ENCODE measurements at regions of chr14 and their contacts with region 1.

Region 1: DNA sequence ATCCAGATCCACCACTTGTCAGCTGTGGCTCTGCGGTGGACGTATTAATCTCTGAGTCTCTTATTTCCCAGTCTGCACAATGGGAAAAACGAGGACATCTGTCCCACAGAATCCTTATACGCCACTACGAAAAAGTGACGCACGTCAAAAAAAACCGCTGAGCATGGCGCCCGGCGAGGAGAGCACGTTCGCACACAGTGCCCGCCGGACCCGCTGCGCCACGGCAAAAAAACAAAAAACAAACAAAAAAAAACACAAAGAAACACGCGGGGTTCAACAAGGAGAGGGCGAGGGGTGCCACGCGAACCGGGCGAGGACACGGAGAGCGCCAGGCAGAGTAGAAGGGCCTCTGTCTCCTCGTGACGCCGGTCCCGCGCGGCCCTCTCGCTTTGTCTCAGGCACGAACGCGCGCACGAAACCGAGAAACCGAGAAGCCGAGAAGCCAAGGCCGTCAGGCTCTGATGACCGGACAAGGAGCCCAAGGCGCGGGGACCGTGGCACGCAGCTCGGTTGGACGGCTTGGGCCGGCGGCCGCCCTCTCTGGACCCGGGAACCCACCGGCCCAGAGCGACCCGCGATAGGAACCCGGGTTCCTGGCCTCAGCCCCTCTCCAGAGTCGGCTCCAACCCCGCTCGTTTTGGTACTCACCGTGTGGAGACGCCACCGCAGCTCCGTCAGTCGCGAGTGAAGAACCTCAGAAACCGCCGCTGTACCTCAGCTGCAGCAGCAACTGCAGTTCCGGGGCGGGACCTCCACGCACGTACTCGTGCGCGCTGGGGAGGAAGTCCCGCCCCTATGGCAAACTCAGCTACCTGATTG is at the start of gene DDX24:
- DNase-seq: peak; percentile 96
- H3K4me3 Mint-ChIP-seq: peak within 1 kb of the TSS; percentile 100
- H3K27ac Mint-ChIP-seq: peak within 1 kb of the TSS; percentile 100
- H3K4me1 Mint-ChIP-seq: peaks cover 57% of the 10 kb centered on the region
- H3K27me3 Mint-ChIP-seq: no peaks in the 10 kb centered on the region
- total RNA-seq, gene DDX24: 252 and 271 TPM in 2 replicates

Region 2: GRCh38 chr14:93939304-93940229 is 141.1 kb before region 1 on chr14:
- intact Hi-C with region 1: loop called (anchors 1 kb)
- DNase-seq: peak; percentile 87
- H3K4me3 Mint-ChIP-seq: peak overlapping the region; percentile 64
- H3K27ac Mint-ChIP-seq: peak overlapping the region; percentile 88
- H3K4me1 Mint-ChIP-seq: peaks cover 24% of the 10 kb centered on the region
- H3K27me3 Mint-ChIP-seq: no peaks in the 10 kb centered on the region

Region 3: GRCh38 chr14:94021001-94021400 is 59.7 kb before region 1 on chr14:
- intact Hi-C with region 1: loop called (anchors 1 kb)
- DNase-seq: no peak
- H3K4me3 Mint-ChIP-seq: peak overlapping the region; percentile 46
- H3K27ac Mint-ChIP-seq: peak overlapping the region; percentile 76
- H3K4me1 Mint-ChIP-seq: peaks cover 37% of the 10 kb centered on the region
- H3K27me3 Mint-ChIP-seq: peaks cover 8% of the 10 kb centered on the region

Region 4: GRCh38 chr14:94056579-94057308 is 23.9 kb before region 1 on chr14:
- intact Hi-C with region 1: loop called (anchors 1 kb)
- DNase-seq: peak; percentile 45
- H3K4me3 Mint-ChIP-seq: peak overlapping the region; percentile 6
- H3K27ac Mint-ChIP-seq: peak overlapping the region; percentile 77
- H3K4me1 Mint-ChIP-seq: peaks cover 70% of the 10 kb centered on the region
- H3K27me3 Mint-ChIP-seq: no peaks in the 10 kb centered on the region

Region 5: GRCh38 chr14:94173885-94174603 is 93.4 kb after region 1 on chr14 and contains the start of gene PPP4R4:
- intact Hi-C with region 1: loop called (anchors 1 kb)
- DNase-seq: peak; percentile 85
- H3K4me3 Mint-ChIP-seq: peak within 1 kb of the TSS; percentile 83
- H3K27ac Mint-ChIP-seq: peak within 1 kb of the TSS; percentile 81
- H3K4me1 Mint-ChIP-seq: peaks cover 22% of the 10 kb centered on the region
- H3K27me3 Mint-ChIP-seq: peaks cover 49% of the 10 kb centered on the region
- total RNA-seq, gene PPP4R4: 2.2 and 2.4 TPM in 2 replicates

Region 6: DNA sequence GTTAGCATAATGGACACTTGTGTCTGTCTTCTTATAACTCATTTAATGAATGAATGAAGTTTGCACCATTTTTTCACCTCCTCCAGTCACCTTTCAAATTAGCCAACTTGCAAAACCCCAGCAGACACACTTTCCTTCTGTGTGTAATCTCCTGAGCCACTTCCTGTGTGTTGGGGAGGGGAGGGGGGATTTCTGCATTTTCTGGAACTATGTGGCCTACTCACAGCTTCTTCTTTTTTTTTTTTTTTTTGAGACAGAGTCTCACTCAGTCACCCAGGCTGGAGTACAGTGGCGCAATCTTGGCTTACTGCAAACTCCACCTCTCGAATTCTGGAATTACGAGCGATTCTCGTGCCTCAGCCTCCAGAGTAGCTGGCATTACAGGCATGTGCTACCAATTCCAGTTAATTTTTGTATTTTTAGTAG is 311.8 kb after region 1 on chr14:
- intact Hi-C with region 1: loop called (anchors 5 kb)
- DNase-seq: peak; percentile 42
- H3K4me3 Mint-ChIP-seq: no peak overlapping the region
- H3K27ac Mint-ChIP-seq: peak overlapping the region; percentile 18
- H3K4me1 Mint-ChIP-seq: peaks cover 46% of the 10 kb centered on the region
- H3K27me3 Mint-ChIP-seq: peaks cover 11% of the 10 kb centered on the region

Measured in activated T-helper 1 cell treated with anti-CD3 and anti-CD28 coated beads, Interleukin-12 subunit alpha, Interleukin-12 subunit beta, Interleukin-2, Interleukin-4 antibody, amounts not matched to agents 30 ng/mL and 10 ng/mL and 1 ng/mL, durations not matched to agents 14 hours and 24 hours and 36 hours (primary cell).